Activated CD4-positive, alpha-beta T cell treated with anti-CD3 and anti-CD28 coated beads for 36 hours (primary cell): ENCODE measurements at regions of chr2 and their contacts with region 1.

Region 1: DNA sequence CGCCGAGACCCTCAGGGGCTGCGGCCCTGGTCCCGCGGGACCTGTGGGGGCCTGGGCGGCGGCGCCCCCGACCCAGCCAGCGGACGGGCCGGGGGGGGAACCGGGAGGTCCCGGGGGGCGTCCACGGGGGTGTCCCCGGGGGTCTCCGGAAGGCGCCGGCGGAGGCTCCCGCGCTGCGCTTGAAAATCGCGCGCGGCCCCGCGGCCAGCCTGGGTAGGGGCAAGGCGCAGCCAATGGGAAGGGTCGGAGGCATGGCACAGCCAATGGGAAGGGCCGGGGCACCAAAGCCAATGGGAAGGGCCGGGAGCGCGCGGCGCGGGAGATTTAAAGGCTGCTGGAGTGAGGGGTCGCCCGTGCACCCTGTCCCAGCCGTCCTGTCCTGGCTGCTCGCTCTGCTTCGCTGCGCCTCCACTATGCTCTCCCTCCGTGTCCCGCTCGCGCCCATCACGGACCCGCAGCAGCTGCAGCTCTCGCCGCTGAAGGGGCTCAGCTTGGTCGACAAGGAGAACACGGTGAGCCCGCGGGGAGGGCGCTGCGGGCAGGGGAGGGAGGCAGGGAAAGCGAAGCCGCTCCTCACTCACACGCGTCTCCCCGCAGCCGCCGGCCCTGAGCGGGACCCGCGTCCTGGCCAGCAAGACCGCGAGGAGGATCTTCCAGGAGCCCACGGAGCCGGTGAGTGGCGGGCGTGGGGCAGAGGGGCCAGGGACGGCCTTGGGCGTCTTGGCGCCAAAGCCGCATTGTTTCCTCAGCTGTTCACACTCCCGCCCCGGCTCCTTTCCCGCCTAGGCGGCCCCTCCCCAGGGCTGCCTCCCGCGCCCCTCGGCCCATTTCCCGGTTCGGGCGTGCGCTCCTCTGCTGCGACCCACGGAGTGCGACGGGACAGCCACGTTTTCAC is at the start of gene RRM2:
- DNase-seq: peak; percentile 98
- ATAC-seq: peak; percentile 82
- H3K4me3 Mint-ChIP-seq: peak within 1 kb of the TSS; percentile 97
- H3K27ac Mint-ChIP-seq: peak within 1 kb of the TSS; percentile 98
- H3K4me1 Mint-ChIP-seq: peaks cover 37% of the 10 kb centered on the region
- H3K27me3 Mint-ChIP-seq: no peaks in the 10 kb centered on the region
- total RNA-seq, gene RRM2: 382 to 469 TPM

Region 2: GRCh38 chr2:9423100-9423921 is 699.3 kb before region 1 on chr2 and contains the starts of genes CPSF3 and ITGB1BP1:
- CTCF ChIA-PET with region 1: no interaction called
- POLR2A ChIA-PET with region 1: no interaction called
- intact Hi-C with region 1: loop called (anchors 5 kb)
- DNase-seq: peak; percentile 99
- ATAC-seq: peak; percentile 89
- H3K4me3 Mint-ChIP-seq: no peak within 1 kb of the TSS
- H3K27ac Mint-ChIP-seq: peak within 1 kb of the TSS; percentile 94
- H3K4me1 Mint-ChIP-seq: peaks cover 36% of the 10 kb centered on the region
- H3K27me3 Mint-ChIP-seq: no peaks in the 10 kb centered on the region
- total RNA-seq, gene CPSF3: 72.3 to 103 TPM
- total RNA-seq, gene ITGB1BP1: 89.7 to 92.1 TPM

Region 3: GRCh38 chr2:9843229-9844035 is 279.2 kb before region 1 on chr2 and contains the start of gene TAF1B:
- CTCF ChIA-PET with region 1: no interaction called
- POLR2A ChIA-PET with region 1: interaction called, 4 read pairs
- intact Hi-C with region 1: loop called in 1 of 2 experiments (anchors 1 kb)
- DNase-seq: peak; percentile 93
- ATAC-seq: peak; percentile 80
- H3K4me3 Mint-ChIP-seq: peak within 1 kb of the TSS; percentile 89
- H3K27ac Mint-ChIP-seq: peak within 1 kb of the TSS; percentile 85
- H3K4me1 Mint-ChIP-seq: peaks cover 37% of the 10 kb centered on the region
- H3K27me3 Mint-ChIP-seq: no peaks in the 10 kb centered on the region
- total RNA-seq, gene TAF1B: 28.7 to 28.8 TPM

Region 4: GRCh38 chr2:10072656-10073480 is 49.8 kb before region 1 on chr2:
- CTCF ChIA-PET with region 1: interaction called, 5 read pairs
- POLR2A ChIA-PET with region 1: no interaction called
- intact Hi-C with region 1: loop called (anchors 2 to 5 kb)
- DNase-seq: peak; percentile 86
- ATAC-seq: peak; percentile 97
- H3K4me3 Mint-ChIP-seq: no peak overlapping the region
- H3K27ac Mint-ChIP-seq: no peak overlapping the region
- H3K4me1 Mint-ChIP-seq: no peaks in the 10 kb centered on the region
- H3K27me3 Mint-ChIP-seq: peaks cover 38% of the 10 kb centered on the region

Region 5: DNA sequence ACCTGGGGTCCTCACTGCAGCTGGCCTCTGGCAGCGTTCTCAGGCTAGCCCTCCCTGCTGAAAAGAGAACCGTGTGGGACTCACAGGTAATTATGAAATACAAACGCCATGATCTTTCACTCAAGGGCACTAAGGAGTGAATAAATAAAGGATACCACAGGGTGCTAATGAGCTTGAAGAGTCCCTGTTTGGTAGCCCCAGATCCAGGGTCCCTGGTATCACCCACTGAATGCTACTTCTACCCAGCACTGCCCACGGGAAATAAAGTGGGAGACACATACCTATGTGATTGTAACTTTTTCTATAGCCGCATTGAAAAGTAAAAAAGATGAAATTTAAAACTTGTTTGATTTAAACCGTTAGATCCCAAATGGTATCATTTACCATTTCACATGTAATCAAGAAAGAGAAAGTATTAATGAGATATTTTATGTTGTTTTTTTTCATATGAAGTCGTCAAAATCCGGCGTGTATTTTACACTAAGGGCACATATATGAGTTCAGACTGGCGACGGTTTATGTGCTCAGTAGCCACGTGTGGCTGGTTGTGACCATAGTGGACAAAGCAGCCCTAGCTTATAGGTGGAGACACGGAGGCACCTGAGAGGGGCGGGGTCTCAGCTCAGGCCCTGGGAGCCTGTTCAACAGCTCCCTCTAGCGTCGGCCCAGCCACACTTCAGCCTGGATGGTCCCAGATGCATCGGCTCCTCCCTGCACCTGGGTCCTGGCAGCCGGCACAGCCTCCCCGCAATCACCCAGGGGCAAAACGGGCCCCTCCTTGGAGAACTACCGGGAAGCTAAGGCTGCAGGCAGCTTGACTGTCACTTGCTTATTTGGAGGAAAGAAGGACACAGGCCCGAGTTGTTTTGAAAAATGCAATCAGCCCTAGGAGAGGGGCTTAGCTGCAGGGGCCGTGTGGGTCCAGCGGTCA is 286.3 kb after region 1 on chr2:
- CTCF ChIA-PET with region 1: interaction called, 42 read pairs
- POLR2A ChIA-PET with region 1: interaction called, 16 read pairs
- intact Hi-C with region 1: loop called (anchors 1 kb)
- DNase-seq: peak; percentile 91
- ATAC-seq: peak; percentile 65
- H3K4me3 Mint-ChIP-seq: peak overlapping the region; percentile 60
- H3K27ac Mint-ChIP-seq: peak overlapping the region; percentile 99
- H3K4me1 Mint-ChIP-seq: peaks cover 63% of the 10 kb centered on the region
- H3K27me3 Mint-ChIP-seq: no peaks in the 10 kb centered on the region

Region 6: GRCh38 chr2:10659898-10660568 is 537.4 kb after region 1 on chr2:
- CTCF ChIA-PET with region 1: no interaction called
- POLR2A ChIA-PET with region 1: no interaction called
- intact Hi-C with region 1: loop called in 1 of 2 experiments (anchors 10 kb)
- DNase-seq: peak; percentile 74
- ATAC-seq: peak; percentile 81
- H3K4me3 Mint-ChIP-seq: no peak overlapping the region
- H3K27ac Mint-ChIP-seq: no peak overlapping the region
- H3K4me1 Mint-ChIP-seq: peaks cover 20% of the 10 kb centered on the region
- H3K27me3 Mint-ChIP-seq: no peaks in the 10 kb centered on the region

Region 7: DNA sequence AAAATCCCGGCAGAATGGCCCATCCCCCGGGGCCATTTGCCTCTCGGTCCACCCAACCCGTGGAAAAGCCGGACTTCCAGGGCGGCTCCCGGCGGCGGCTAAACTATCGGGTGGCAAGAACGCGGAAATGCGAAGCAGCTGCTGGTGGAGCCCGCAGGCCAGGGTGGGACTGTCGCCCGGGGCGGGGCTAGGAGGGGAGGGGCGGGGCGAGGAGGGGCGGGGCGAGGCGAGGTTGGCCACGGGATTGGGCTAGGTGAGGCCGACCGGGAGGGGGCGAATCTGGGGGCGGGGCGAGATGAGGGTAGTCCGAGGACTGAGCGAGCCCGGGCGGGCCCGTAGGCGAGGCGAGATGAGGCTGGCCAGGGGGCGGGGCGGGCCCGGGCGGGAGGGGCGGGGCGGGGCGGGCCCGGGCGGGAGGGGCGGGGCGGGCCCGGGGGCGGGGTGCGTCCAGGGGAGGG is 1032.3 kb after region 1 on chr2:
- CTCF ChIA-PET with region 1: no interaction called
- POLR2A ChIA-PET with region 1: no interaction called
- intact Hi-C with region 1: loop called in 1 of 2 experiments (anchors 2 kb)
- DNase-seq: peak; percentile 100
- ATAC-seq: peak; percentile 95
- H3K4me3 Mint-ChIP-seq: peak overlapping the region; percentile 73
- H3K27ac Mint-ChIP-seq: peak overlapping the region; percentile 83
- H3K4me1 Mint-ChIP-seq: peaks cover 15% of the 10 kb centered on the region
- H3K27me3 Mint-ChIP-seq: no peaks in the 10 kb centered on the region